HCT116 (cell line): ENCODE measurements at regions of chr17 and their contacts with region 1.

Region 1: DNA sequence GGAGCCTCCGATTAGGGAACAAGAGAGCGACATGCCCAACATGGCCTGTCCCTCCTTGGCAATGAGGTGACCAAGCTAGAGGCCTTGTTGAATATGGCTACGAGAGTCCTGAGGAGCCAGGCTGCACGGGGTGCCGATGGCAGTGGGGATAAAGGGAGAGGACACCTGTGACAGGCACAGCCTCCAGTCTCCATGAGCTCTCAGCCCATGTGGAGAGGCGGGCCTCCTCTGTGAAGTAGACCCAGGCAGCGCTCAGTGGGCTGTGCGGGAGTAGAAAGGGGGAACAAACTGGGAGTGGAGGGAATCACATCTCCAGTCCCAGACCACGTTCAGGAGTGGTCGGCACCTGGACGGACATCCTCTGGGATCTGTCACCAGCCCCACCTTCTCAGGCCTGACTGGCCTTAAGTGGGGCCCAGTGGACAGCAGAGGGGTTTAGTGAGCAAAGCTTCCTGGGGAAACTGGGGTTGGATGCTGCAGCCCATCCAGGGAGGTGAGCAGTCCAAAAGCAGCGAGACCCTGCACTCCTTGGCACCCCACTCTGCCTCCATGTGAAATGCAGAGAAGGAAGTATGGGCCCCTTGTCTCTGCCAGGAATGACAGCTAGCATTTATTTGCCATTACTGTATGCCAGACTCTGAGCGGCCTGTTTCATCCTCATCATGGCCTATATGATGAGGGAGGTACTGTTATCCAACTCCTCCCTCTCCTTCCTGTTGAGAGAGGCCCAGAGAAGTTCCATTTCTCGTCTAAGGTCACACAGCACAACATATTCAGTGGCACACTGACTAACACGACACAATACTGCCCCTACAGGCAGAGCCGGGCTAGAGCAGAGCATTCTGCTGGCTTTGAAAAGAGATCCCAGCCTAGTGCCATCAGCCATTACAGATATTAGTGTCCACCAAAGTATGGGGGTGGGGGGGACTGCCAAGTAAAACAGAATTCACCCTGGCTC is 4.5 kb upstream of the TMEM92 start:
- DNase-seq: peak; percentile 60
- ATAC-seq: peak; percentile 67
- H3K4me3 ChIP-seq: no peak overlapping the region
- H3K27ac ChIP-seq: no peak overlapping the region
- H3K4me1 ChIP-seq: peaks cover 38 to 46% of the 10 kb centered on the region in 2 experiments
- H3K27me3 ChIP-seq: no peaks in the 10 kb centered on the region
- CTCF ChIP-seq: peak; percentile 92 to 98 (median 98)
- POLR2A ChIP-seq: no peak
- RAD21 ChIP-seq: peak; percentile 84

Region 2: DNA sequence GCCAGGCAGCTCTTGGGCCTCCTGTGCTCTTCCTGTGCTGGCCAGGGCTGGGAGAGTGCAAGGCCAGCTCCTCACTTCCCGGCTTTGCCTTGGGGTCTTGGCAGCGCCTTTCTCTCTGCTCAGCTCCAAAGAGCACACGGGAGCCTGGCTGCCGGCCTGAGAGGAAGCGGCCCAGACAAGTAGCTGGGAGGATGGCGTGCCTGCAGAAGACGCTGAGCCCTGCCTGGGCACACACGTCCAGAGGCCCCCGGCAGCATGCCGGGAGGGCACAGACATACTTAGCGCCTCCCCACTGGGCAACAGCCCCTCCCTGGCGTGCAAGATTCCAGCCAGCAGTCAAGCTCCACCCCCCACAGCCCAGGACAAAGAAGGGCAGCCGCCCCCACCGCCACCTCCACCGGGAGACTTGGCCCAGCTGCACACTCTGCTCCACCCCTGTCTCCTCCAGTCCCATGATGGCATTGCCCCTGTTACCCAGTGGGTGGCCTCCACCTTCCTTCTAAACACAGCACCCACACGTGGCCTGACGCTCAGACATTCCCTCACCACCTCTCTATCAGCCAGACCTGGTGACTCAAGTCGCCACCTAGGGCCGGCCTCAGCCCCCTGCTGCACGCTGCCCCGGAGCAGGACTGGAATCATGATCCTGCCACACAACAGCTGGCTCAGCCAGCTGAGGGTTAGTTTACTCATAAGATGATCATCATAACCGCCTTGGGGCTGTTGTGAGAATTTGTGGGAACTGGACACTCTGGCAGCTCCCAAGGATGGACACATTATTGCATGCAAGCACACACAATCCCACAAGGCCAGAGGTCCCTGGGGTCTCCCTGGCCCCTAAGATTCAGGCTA is 91.5 kb before region 1 on chr17:
- CTCF ChIA-PET with region 1: interaction called, 10 read pairs
- POLR2A ChIA-PET with region 1: no interaction called
- RAD21 ChIA-PET with region 1: interaction called in 1 of 2 experiments, 4 read pairs
- intact Hi-C with region 1: no loop called
- DNase-seq: peak; percentile 90
- ATAC-seq: peak; percentile 94
- H3K4me3 ChIP-seq: peak overlapping the region; percentile 22 to 43
- H3K27ac ChIP-seq: peak overlapping the region; percentile 61
- H3K4me1 ChIP-seq: peaks cover 41 to 56% of the 10 kb centered on the region in 2 experiments
- H3K27me3 ChIP-seq: no peaks in the 10 kb centered on the region
- CTCF ChIP-seq: peak; percentile 80 to 96 (median 82)
- POLR2A ChIP-seq: no peak
- RAD21 ChIP-seq: peak; percentile 72

Region 3: GRCh38 chr17:50289991-50290702 is 20.4 kb after region 1 on chr17:
- CTCF ChIA-PET with region 1: interaction called, 29 read pairs
- POLR2A ChIA-PET with region 1: no interaction called
- RAD21 ChIA-PET with region 1: no interaction called
- intact Hi-C with region 1: no loop called
- DNase-seq: peak; percentile 29
- ATAC-seq: peak; percentile 60
- H3K4me3 ChIP-seq: no peak overlapping the region; a peak in 1 of 4 replicates
- H3K27ac ChIP-seq: no peak overlapping the region
- H3K4me1 ChIP-seq: peaks cover 0 to 13% of the 10 kb centered on the region in 2 experiments; a peak in 2 of 4 replicates
- H3K27me3 ChIP-seq: no peaks in the 10 kb centered on the region
- CTCF ChIP-seq: no peak
- POLR2A ChIP-seq: no peak
- RAD21 ChIP-seq: no peak